K562 (cell line): ENCODE measurements at regions of chr2 and their contacts with region 1.

Region 1: GRCh38 chr2:158688722-158689121 is 106.4 kb upstream of the DAPL1 start:
- DNase-seq: no peak
- ATAC-seq: no peak
- H3K4me3 ChIP-seq: no peak overlapping the region
- H3K27ac ChIP-seq: no peak overlapping the region
- H3K4me1 ChIP-seq: no peaks in the 10 kb centered on the region
- H3K27me3 ChIP-seq: peaks cover 34 to 51% of the 10 kb centered on the region in 2 experiments; a peak in 4 of 5 replicates
- CTCF ChIP-seq: no peak
- EP300 ChIP-seq: no peak
- POLR2A ChIP-seq: no peak
- RAD21 ChIP-seq: no peak

Region 2: DNA sequence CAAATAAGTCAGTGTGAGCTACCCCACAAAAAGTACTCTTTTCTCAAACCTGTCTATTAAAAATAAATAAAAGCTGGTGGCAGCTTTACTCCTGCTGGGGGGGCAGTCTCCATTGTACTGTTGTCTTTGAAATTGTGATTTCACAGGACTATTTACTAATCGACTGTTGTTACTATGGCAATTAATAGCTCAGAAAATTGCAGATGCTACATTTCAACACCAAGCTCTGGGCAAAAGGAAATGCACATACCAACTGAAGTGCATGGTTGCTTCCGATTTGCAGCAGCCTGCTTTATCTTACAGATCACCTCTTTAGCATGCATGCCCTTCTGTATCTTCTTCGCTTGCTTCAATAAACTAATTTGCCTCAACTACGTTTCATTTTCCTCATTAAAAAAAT is 11.2 kb before region 1 on chr2:
- CTCF ChIA-PET with region 1: no interaction called
- POLR2A ChIA-PET with region 1: interaction called, 13 read pairs
- in situ Hi-C with region 1: no loop called
- intact Hi-C with region 1: no loop called
- DNase-seq: no peak
- ATAC-seq: no peak
- H3K4me3 ChIP-seq: no peak overlapping the region
- H3K27ac ChIP-seq: no peak overlapping the region
- H3K4me1 ChIP-seq: no peaks in the 10 kb centered on the region
- H3K27me3 ChIP-seq: no peaks in the 10 kb centered on the region
- CTCF ChIP-seq: no peak
- EP300 ChIP-seq: no peak
- POLR2A ChIP-seq: no peak
- RAD21 ChIP-seq: no peak

Region 3: DNA sequence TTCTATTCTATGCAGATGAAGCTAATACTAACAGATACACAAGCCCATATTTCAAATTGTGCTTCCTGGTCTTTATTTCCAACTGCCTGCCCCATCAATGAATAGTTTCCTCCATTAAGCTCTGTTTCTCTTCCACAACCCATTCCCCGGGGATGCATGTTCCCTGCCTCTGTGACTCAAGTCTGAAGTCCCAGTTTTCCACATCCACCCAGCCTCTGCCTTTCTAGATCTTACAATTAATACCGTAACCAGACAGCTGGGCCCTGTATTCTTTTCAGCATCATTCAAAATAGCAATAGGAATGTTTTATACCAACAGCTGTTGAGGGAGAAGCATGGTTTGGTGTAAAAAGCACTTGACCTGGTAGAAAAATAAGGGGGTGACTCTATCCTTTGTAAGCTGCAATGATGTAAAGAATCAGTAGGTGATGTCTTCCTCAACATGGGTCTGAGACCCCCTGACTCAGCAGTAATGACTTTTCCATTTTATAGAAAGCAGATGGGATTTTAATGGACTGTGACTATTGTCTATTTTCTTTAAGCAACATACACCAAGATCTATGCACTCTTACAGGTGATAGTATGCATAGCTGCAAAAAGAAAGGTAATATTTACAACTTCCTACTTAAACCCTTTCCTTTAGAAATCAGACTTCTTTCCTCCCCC is 60.3 kb after region 1 on chr2:
- CTCF ChIA-PET with region 1: no interaction called
- POLR2A ChIA-PET with region 1: no interaction called
- in situ Hi-C with region 1: no loop called
- intact Hi-C with region 1: no loop called
- DNase-seq: no peak
- ATAC-seq: no peak
- H3K4me3 ChIP-seq: no peak overlapping the region
- H3K27ac ChIP-seq: no peak overlapping the region
- H3K4me1 ChIP-seq: no peaks in the 10 kb centered on the region; a peak in 1 of 5 replicates
- H3K27me3 ChIP-seq: peaks cover 21 to 30% of the 10 kb centered on the region in 2 experiments
- CTCF ChIP-seq: no peak
- EP300 ChIP-seq: no peak
- POLR2A ChIP-seq: no peak
- RAD21 ChIP-seq: no peak